Activated CD4-positive, alpha-beta T cell treated with anti-CD3 and anti-CD28 coated beads for 36 hours (primary cell): ENCODE measurements at regions of chr1 and their contacts with region 1.

Region 1: DNA sequence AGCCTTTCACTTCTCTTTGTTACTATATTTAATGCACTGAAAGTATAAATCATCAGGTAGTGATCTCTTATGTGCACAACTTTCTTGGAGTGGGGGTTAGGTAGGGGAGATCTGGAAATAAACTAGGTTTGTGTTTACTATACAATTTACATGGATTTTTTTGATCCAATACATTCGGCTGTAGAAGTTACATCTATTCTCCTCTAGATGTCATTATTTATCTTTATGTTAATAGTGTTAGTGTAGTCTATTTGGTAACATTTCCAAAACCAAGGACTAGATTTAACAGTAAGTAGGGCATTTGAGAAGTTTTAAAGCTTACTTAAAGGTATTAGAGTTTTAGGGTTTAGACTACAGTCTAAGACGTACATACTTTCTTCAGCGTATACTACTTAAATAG is 5.4 kb downstream of the VPS45 start:
- DNase-seq: no peak
- ATAC-seq: peak; percentile 44
- H3K4me3 Mint-ChIP-seq: no peak overlapping the region
- H3K27ac Mint-ChIP-seq: no peak overlapping the region
- H3K4me1 Mint-ChIP-seq: peaks cover 27% of the 10 kb centered on the region
- H3K27me3 Mint-ChIP-seq: no peaks in the 10 kb centered on the region

Region 2: DNA sequence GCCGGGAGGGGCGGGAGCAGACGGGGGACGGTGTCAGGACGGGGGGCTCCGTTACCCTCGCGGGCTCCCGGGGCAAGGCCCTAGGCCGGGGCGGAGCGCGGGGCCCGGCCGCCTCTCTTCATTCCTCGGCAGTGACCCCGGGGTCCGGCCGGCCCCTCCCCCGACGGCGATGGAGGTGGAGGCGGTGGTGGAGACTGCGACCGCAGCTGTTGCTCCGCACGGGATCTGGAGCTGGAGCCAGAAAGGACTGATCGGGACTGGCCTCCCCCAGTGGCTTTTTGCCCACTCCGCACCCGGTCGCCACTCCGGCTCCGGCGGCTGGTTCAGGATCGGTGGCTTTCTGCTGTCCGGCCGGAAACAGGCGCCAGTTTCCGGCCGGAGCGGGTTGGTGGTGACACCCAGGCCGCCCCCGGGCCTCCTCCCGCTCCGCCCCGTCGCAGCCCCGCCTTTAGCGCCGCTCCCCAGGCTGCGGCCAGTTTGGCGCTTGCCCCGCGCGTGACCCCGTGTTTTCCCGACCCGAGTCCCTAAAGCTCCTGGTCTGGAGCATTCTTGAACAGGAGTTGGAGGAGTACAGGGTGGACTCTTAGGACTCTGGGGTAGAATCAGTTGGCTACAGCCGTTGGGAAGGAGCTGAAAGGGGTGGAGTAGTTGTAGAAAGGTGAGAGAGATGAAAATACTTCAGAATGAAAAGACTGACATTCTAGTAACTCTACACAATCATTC is 62.4 kb before region 1 on chr1 and contains the start of gene OTUD7B:
- CTCF ChIA-PET with region 1: no interaction called
- POLR2A ChIA-PET with region 1: no interaction called
- intact Hi-C with region 1: no loop called
- DNase-seq: peak; percentile 88
- ATAC-seq: peak; percentile 62
- H3K4me3 Mint-ChIP-seq: peak within 1 kb of the TSS; percentile 99
- H3K27ac Mint-ChIP-seq: peak within 1 kb of the TSS; percentile 99
- H3K4me1 Mint-ChIP-seq: peaks cover 37% of the 10 kb centered on the region
- H3K27me3 Mint-ChIP-seq: no peaks in the 10 kb centered on the region
- total RNA-seq, gene OTUD7B: 18.5 to 20.1 TPM

Region 3: GRCh38 chr1:150162862-150163706 is 90.1 kb after region 1 on chr1:
- CTCF ChIA-PET with region 1: interaction called, 65 read pairs
- POLR2A ChIA-PET with region 1: no interaction called
- intact Hi-C with region 1: loop called in 1 of 2 experiments (anchors 1 kb)
- DNase-seq: peak; percentile 60
- ATAC-seq: peak; percentile 63
- H3K4me3 Mint-ChIP-seq: no peak overlapping the region
- H3K27ac Mint-ChIP-seq: no peak overlapping the region
- H3K4me1 Mint-ChIP-seq: peaks cover 39% of the 10 kb centered on the region
- H3K27me3 Mint-ChIP-seq: no peaks in the 10 kb centered on the region

Region 4: GRCh38 chr1:150168960-150169601 is 96.1 kb after region 1 on chr1:
- CTCF ChIA-PET with region 1: interaction called, 65 read pairs
- POLR2A ChIA-PET with region 1: no interaction called
- intact Hi-C with region 1: loop called (anchors 1 kb)
- DNase-seq: peak; percentile 76
- ATAC-seq: peak; percentile 73
- H3K4me3 Mint-ChIP-seq: no peak overlapping the region
- H3K27ac Mint-ChIP-seq: no peak overlapping the region
- H3K4me1 Mint-ChIP-seq: no peaks in the 10 kb centered on the region
- H3K27me3 Mint-ChIP-seq: no peaks in the 10 kb centered on the region

Region 5: GRCh38 chr1:150186789-150187559 is 114.0 kb after region 1 on chr1:
- CTCF ChIA-PET with region 1: interaction called, 17 read pairs
- POLR2A ChIA-PET with region 1: interaction called, 3 read pairs
- intact Hi-C with region 1: loop called (anchors 1 to 5 kb)
- DNase-seq: peak; percentile 17
- ATAC-seq: peak; percentile 82
- H3K4me3 Mint-ChIP-seq: no peak overlapping the region
- H3K27ac Mint-ChIP-seq: peak overlapping the region; percentile 13
- H3K4me1 Mint-ChIP-seq: peaks cover 10% of the 10 kb centered on the region
- H3K27me3 Mint-ChIP-seq: no peaks in the 10 kb centered on the region

Region 6: DNA sequence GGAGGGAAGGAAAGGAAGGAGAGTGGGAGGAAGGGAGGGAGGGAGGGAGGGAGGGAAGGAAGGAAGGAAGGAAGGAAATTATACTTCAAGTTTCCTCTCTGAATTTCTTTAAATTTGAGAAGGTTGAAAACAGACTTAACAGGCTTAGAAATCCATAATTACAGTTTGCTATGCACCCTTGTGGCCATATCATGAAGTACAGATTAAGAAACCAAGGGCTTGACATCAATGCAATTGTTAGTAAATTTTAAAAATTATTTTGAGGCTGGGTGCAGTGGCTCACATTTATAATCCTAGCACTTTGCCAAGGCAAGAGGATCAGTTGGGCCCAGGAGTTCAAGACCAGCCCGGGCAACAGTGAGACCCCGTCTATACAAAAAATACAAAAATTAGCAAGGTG is 148.6 kb after region 1 on chr1:
- CTCF ChIA-PET with region 1: no interaction called
- POLR2A ChIA-PET with region 1: no interaction called
- intact Hi-C with region 1: no loop called
- DNase-seq: no peak
- ATAC-seq: no peak
- H3K4me3 Mint-ChIP-seq: no peak overlapping the region
- H3K27ac Mint-ChIP-seq: no peak overlapping the region
- H3K4me1 Mint-ChIP-seq: no peaks in the 10 kb centered on the region
- H3K27me3 Mint-ChIP-seq: no peaks in the 10 kb centered on the region

Region 7: DNA sequence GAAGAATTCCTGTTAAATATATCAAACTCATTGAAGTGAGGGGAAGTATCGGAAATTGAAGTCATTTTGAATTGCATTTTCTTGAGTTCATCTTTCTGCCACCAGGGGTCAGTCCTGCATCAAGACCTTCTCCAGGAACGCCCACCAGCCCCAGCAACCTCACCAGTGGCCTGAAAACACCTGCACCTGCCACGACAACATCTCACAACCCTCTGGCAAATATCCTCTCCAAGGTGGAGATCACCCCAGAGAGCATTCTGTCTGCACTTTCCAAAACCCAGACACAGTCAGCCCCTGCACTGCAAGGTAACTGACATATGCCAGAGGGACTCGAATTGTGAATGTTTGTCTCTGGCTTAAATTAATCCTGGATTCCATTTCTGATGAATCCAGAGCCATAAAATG is 391.5 kb after region 1 on chr1:
- CTCF ChIA-PET with region 1: no interaction called
- POLR2A ChIA-PET with region 1: no interaction called
- intact Hi-C with region 1: no loop called
- DNase-seq: peak; percentile 85
- ATAC-seq: peak; percentile 69
- H3K4me3 Mint-ChIP-seq: no peak overlapping the region
- H3K27ac Mint-ChIP-seq: no peak overlapping the region
- H3K4me1 Mint-ChIP-seq: peaks cover 4% of the 10 kb centered on the region
- H3K27me3 Mint-ChIP-seq: no peaks in the 10 kb centered on the region